Vagina (tissue), 2 donors: ENCODE measurements at regions of chr1 and their contacts with region 1.

Region 1: GRCh38 chr1:77322061-77322900 is 40.5 kb downstream of the AK5 start:
- DNase-seq: no peak
- H3K4me3 ChIP-seq: no peak overlapping the region
- H3K27ac ChIP-seq: no peak overlapping the region
- H3K4me1 ChIP-seq: no peaks in the 10 kb centered on the region
- H3K27me3 ChIP-seq: no peaks in the 10 kb centered on the region
- CTCF ChIP-seq: no peak
- POLR2A ChIP-seq: no peak

Region 2: DNA sequence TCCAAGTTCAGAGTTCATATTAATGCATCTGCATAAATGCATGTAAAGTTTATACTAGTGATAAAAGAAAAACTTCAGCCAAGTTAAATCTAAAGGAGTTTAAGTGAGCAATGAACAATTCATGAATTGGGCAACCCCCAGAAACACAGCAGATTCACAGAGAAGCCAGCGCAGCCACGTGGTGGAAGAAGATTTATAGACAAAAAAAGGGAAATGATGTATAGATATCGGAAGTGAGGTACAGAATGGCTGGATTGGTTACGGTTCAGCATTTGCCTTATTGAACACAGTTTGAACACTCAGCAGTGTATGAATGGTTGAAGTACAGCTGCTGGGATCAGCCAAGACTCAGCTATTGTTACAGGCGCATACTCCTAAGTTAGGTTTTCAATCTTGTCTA is 34.7 kb before region 1 on chr1:
- intact Hi-C with region 1: loop called (anchors 2 kb)
- DNase-seq: no peak
- H3K4me3 ChIP-seq: no peak overlapping the region
- H3K27ac ChIP-seq: no peak overlapping the region
- H3K4me1 ChIP-seq: peaks cover 7% of the 10 kb centered on the region
- H3K27me3 ChIP-seq: no peaks in the 10 kb centered on the region
- CTCF ChIP-seq: no peak
- POLR2A ChIP-seq: no peak